Ascending aorta (tissue), 2 donors: ENCODE measurements at regions of chr7 and their contacts with region 1.

Region 1: DNA sequence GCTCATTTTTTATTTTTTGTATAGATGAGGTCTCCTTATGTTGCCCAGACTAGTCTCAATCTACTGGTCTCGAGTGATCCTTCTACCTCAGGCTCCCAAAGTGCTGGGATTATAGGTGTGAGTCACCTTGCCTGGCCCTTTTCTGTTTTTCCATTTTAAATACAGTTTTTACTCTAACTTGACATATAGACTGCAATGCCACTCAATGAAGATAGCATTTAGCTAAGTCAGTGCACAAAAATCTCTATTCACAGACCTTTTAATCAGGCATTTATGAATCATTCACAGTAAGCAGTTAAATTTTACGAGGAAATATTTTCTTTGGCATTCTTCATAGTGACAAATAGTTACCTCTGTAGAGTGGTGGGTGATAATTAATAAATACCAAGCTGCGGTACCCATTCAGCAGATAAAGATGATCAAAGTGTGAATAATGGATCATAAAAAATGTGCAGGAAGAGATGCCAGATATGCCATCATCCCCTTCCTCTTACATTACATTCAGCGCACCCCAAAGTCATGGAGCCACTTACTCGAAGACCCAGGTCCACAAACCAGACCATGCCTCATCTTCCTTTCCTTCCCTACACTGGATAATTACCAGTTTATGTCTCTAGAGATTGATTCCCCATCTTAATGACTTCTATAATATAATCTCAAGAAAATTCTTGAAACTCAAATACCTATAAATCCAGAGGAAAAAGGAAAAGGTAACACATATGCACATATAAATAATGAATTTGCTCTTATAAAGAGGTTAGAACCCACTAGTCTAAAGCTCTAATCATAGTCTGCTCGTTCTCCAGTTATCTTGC is 56.0 kb downstream of the UBE2H start:
- DNase-seq: no peak
- H3K4me3 ChIP-seq: no peak overlapping the region
- H3K27ac ChIP-seq: peak overlapping the region in 1 of 2 donors; percentile 32
- H3K4me1 ChIP-seq: peaks cover 0 to 26% of the 10 kb centered on the region in 2 donors
- H3K27me3 ChIP-seq: no peaks in the 10 kb centered on the region
- CTCF ChIP-seq: no peak

Region 2: GRCh38 chr7:129859183-129859582 is 37.6 kb before region 1 on chr7:
- intact Hi-C with region 1: no loop called
- DNase-seq: no peak
- H3K4me3 ChIP-seq: no peak overlapping the region
- H3K27ac ChIP-seq: peak overlapping the region; percentile 88 to 96
- H3K4me1 ChIP-seq: peaks cover 8 to 87% of the 10 kb centered on the region in 2 donors
- H3K27me3 ChIP-seq: no peaks in the 10 kb centered on the region
- CTCF ChIP-seq: no peak

Region 3: GRCh38 chr7:129933627-129934026 is 36.9 kb after region 1 on chr7:
- intact Hi-C with region 1: loop called (anchors 5 kb)
- DNase-seq: no peak
- H3K4me3 ChIP-seq: no peak overlapping the region
- H3K27ac ChIP-seq: no peak overlapping the region
- H3K4me1 ChIP-seq: no peaks in the 10 kb centered on the region
- H3K27me3 ChIP-seq: no peaks in the 10 kb centered on the region
- CTCF ChIP-seq: no peak